Activated CD4-positive, alpha-beta T cell treated with anti-CD3 and anti-CD28 coated beads for 36 hours (primary cell): ENCODE measurements at regions of chr16 and their contacts with region 1.

Region 1: GRCh38 chr16:89490387-89491237 is at the start of gene ANKRD11:
- DNase-seq: peak; percentile 99
- ATAC-seq: peak; percentile 93
- H3K4me3 Mint-ChIP-seq: peak within 1 kb of the TSS; percentile 87
- H3K27ac Mint-ChIP-seq: peak within 1 kb of the TSS; percentile 92
- H3K4me1 Mint-ChIP-seq: peaks cover 44% of the 10 kb centered on the region
- H3K27me3 Mint-ChIP-seq: no peaks in the 10 kb centered on the region
- total RNA-seq, gene ANKRD11: 144 to 145 TPM

Region 2: GRCh38 chr16:88811769-88812512 is 678.7 kb before region 1 on chr16 and contains the start of gene APRT:
- CTCF ChIA-PET with region 1: no interaction called
- POLR2A ChIA-PET with region 1: no interaction called
- intact Hi-C with region 1: loop called in 1 of 2 experiments (anchors 1 kb)
- DNase-seq: peak; percentile 99
- ATAC-seq: peak; percentile 76
- H3K4me3 Mint-ChIP-seq: peak within 1 kb of the TSS; percentile 86
- H3K27ac Mint-ChIP-seq: peak within 1 kb of the TSS; percentile 94
- H3K4me1 Mint-ChIP-seq: peaks cover 22% of the 10 kb centered on the region
- H3K27me3 Mint-ChIP-seq: no peaks in the 10 kb centered on the region
- total RNA-seq, gene APRT: 105 to 179 TPM

Region 3: GRCh38 chr16:89246903-89247733 is 243.5 kb before region 1 on chr16:
- CTCF ChIA-PET with region 1: no interaction called
- POLR2A ChIA-PET with region 1: interaction called, 4 read pairs
- intact Hi-C with region 1: loop called (anchors 1 to 5 kb)
- DNase-seq: peak; percentile 99
- ATAC-seq: peak; percentile 93
- H3K4me3 Mint-ChIP-seq: peak overlapping the region; percentile 71
- H3K27ac Mint-ChIP-seq: no peak overlapping the region
- H3K4me1 Mint-ChIP-seq: peaks cover 15% of the 10 kb centered on the region
- H3K27me3 Mint-ChIP-seq: no peaks in the 10 kb centered on the region

Region 4: GRCh38 chr16:89350701-89351380 is 139.8 kb before region 1 on chr16:
- CTCF ChIA-PET with region 1: interaction called, 3 read pairs
- POLR2A ChIA-PET with region 1: interaction called, 4 read pairs
- intact Hi-C with region 1: loop called (anchors 1 to 2 kb)
- DNase-seq: peak; percentile 78
- ATAC-seq: peak; percentile 81
- H3K4me3 Mint-ChIP-seq: no peak overlapping the region
- H3K27ac Mint-ChIP-seq: peak overlapping the region; percentile 74
- H3K4me1 Mint-ChIP-seq: peaks cover 94% of the 10 kb centered on the region
- H3K27me3 Mint-ChIP-seq: no peaks in the 10 kb centered on the region

Region 5: GRCh38 chr16:89422905-89423630 is 67.5 kb before region 1 on chr16:
- CTCF ChIA-PET with region 1: no interaction called
- POLR2A ChIA-PET with region 1: interaction called, 7 read pairs
- intact Hi-C with region 1: loop called in 1 of 2 experiments (anchors 5 kb)
- DNase-seq: peak; percentile 80
- ATAC-seq: peak; percentile 80
- H3K4me3 Mint-ChIP-seq: peak overlapping the region; percentile 15
- H3K27ac Mint-ChIP-seq: peak overlapping the region; percentile 74
- H3K4me1 Mint-ChIP-seq: peaks cover 84% of the 10 kb centered on the region
- H3K27me3 Mint-ChIP-seq: no peaks in the 10 kb centered on the region

Region 6: GRCh38 chr16:89657442-89658220 is 167.0 kb after region 1 on chr16 and contains the starts of genes CHMP1A and SPATA33:
- CTCF ChIA-PET with region 1: no interaction called
- POLR2A ChIA-PET with region 1: interaction called, 4 read pairs
- intact Hi-C with region 1: loop called in 1 of 2 experiments (anchors 1 kb)
- DNase-seq: peak; percentile 96
- ATAC-seq: peak; percentile 93
- H3K4me3 Mint-ChIP-seq: peak within 1 kb of the TSS; percentile 90
- H3K27ac Mint-ChIP-seq: peak within 1 kb of the TSS; percentile 83
- H3K4me1 Mint-ChIP-seq: peaks cover 28% of the 10 kb centered on the region
- H3K27me3 Mint-ChIP-seq: no peaks in the 10 kb centered on the region
- total RNA-seq, gene CHMP1A: 37.9 to 67.3 TPM
- total RNA-seq, gene SPATA33: 6.8 to 11.6 TPM

Region 7: DNA sequence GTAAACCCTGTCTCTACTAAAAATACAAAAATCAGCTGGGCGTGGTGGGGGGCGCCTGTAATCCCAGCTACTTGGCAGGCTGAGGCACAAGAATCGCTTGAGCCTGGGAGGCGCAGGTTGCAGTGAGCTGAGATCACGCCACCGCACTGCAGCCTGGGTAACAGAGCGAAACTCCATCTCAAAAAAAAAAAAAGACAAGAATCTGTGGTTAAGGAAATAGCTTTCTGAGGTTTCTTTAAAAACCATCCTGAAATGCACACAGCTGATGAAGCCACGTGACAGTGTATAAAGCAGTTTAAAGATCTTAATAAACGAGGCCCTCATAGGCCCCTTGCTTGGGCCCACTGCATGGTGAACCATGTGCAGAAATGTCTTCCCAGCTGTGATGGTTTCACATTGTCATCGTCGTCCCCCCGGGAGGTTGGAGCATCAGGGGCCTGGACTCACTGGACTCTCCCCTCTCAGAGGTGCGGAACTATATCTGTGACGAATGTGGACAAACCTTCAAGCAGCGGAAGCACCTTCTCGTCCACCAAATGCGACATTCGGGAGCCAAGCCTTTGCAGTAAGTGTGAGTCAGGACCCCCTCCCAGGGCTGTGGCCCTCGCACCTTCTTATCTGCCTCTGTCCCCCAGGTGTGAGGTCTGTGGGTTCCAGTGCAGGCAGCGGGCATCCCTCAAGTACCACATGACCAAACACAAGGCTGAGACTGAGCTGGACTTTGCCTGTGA is 246.9 kb after region 1 on chr16:
- CTCF ChIA-PET with region 1: no interaction called
- POLR2A ChIA-PET with region 1: no interaction called
- intact Hi-C with region 1: no loop called
- DNase-seq: peak; percentile 66
- ATAC-seq: peak; percentile 58
- H3K4me3 Mint-ChIP-seq: no peak overlapping the region
- H3K27ac Mint-ChIP-seq: peak overlapping the region; percentile 67
- H3K4me1 Mint-ChIP-seq: peaks cover 25% of the 10 kb centered on the region
- H3K27me3 Mint-ChIP-seq: no peaks in the 10 kb centered on the region

Region 8: DNA sequence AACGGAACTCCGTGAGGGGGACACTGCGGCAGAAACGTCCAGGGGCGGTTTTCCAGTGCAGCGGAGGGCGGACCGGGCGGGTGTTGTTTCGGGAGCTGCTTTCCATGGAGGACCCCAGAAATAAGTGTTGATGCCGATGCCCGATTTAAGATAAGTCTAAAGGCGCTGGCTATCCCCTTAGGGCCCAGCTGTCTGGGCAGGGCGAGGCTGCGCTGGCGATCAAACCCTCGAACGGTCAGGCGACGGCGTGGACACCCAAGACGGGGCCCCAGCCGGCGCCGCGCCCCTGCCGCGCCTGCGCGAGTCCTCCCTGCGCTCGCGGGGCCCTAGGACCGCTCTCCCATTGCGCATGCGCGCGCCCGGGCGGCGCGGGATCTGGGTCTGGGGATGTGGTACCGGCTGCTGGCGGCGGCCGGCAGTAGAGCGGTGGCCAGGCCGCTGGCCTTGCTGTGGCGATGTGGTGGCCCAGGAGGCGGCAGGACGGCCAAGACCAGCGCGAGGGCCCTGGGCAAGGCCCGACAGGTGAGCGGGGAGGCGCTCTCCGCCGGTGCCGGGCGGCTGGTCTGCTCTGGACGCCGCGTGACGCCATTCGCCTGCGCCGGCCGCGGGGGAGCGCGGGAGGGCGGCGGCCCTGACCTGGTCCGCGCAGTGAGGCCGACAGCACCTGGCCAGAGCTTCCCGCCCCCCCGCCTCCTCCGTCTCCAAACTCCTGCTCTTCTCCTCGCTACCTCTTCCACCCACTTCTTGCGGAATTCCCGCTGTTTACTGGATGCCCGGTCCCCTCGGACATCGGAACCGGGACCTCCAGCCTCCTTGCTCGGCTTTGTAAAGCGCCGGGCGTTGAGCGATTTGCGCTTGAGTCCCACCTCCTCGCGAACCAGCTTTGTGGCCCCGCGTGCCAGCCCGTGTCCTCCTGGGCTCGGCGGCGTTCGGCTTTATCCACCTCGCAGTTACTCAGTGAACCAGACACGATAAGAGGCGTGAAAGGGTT is 481.9 kb after region 1 on chr16:
- CTCF ChIA-PET with region 1: no interaction called
- POLR2A ChIA-PET with region 1: no interaction called
- intact Hi-C with region 1: loop called in 1 of 2 experiments (anchors 1 kb)
- DNase-seq: peak; percentile 94
- ATAC-seq: peak; percentile 94
- H3K4me3 Mint-ChIP-seq: peak overlapping the region; percentile 99
- H3K27ac Mint-ChIP-seq: peak overlapping the region; percentile 95
- H3K4me1 Mint-ChIP-seq: peaks cover 32% of the 10 kb centered on the region
- H3K27me3 Mint-ChIP-seq: no peaks in the 10 kb centered on the region